CD4-positive, alpha-beta memory T cell (primary cell): ENCODE measurements at regions of chr16 and their contacts with region 1.

Region 1: GRCh38 chr16:69930117-69930776 is 20.9 kb upstream of the CLEC18A start:
- DNase-seq: peak in 4 of 5 donors; percentile 32 to 47 (median 40)
- H3K4me3 ChIP-seq: no peak overlapping the region
- H3K4me3 Mint-ChIP-seq: no peak overlapping the region
- H3K27ac ChIP-seq: no peak overlapping the region
- H3K27ac Mint-ChIP-seq: peak overlapping the region in 1 of 7 donors; percentile 63
- H3K4me1 ChIP-seq: no peaks in the 10 kb centered on the region
- H3K4me1 Mint-ChIP-seq: peaks cover 0 to 4% (median 0%) of the 10 kb centered on the region in 4 donors
- H3K27me3 ChIP-seq: no peaks in the 10 kb centered on the region
- H3K27me3 Mint-ChIP-seq: no peaks in the 10 kb centered on the region

Region 2: GRCh38 chr16:69709456-69710084 is 220.7 kb before region 1 on chr16:
- CTCF ChIA-PET with region 1: interaction called, 13 read pairs
- POLR2A ChIA-PET with region 1: no interaction called
- intact Hi-C with region 1: no loop called
- DNase-seq: peak in 4 of 5 donors; percentile 49 to 60 (median 58)
- H3K4me3 ChIP-seq: no peak overlapping the region
- H3K4me3 Mint-ChIP-seq: no peak overlapping the region
- H3K27ac ChIP-seq: no peak overlapping the region
- H3K27ac Mint-ChIP-seq: peak overlapping the region in 6 of 7 donors; percentile 0 to 70 (median 38)
- H3K4me1 ChIP-seq: peaks cover 6% of the 10 kb centered on the region
- H3K4me1 Mint-ChIP-seq: peaks cover 0 to 4% (median 2%) of the 10 kb centered on the region in 4 donors
- H3K27me3 ChIP-seq: no peaks in the 10 kb centered on the region
- H3K27me3 Mint-ChIP-seq: no peaks in the 10 kb centered on the region

Region 3: GRCh38 chr16:69796351-69797118 is 133.7 kb before region 1 on chr16:
- CTCF ChIA-PET with region 1: interaction called, 12 read pairs
- POLR2A ChIA-PET with region 1: no interaction called
- intact Hi-C with region 1: loop called (anchors 1 kb)
- DNase-seq: peak; percentile 21 to 43 (median 39)
- H3K4me3 ChIP-seq: no peak overlapping the region
- H3K4me3 Mint-ChIP-seq: no peak overlapping the region
- H3K27ac ChIP-seq: no peak overlapping the region
- H3K27ac Mint-ChIP-seq: no peak overlapping the region
- H3K4me1 ChIP-seq: no peaks in the 10 kb centered on the region
- H3K4me1 Mint-ChIP-seq: peaks cover 7 to 16% (median 8%) of the 10 kb centered on the region in 4 donors
- H3K27me3 ChIP-seq: no peaks in the 10 kb centered on the region
- H3K27me3 Mint-ChIP-seq: no peaks in the 10 kb centered on the region

Region 4: DNA sequence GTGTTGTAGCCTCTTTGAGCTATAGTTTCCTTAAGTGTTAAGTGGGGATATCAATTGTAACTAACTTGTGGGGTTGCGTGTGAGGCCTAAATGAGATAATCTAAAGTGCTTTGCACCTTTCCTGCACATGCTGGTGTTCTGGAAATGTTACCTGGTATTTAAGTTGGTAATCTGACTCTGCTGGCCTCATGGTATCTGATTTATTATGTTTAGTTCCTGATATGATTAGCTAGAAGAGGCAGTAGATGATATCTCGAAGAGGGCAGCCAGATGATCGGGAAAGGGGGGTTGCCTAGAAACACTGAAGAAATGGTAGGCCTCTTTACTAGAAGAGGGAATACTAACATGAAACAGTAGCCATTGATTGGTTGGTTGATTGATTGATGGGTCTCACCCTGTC is 44.5 kb before region 1 on chr16:
- CTCF ChIA-PET with region 1: interaction called, 17 read pairs
- POLR2A ChIA-PET with region 1: no interaction called
- intact Hi-C with region 1: no loop called
- DNase-seq: no peak
- H3K4me3 ChIP-seq: no peak overlapping the region
- H3K4me3 Mint-ChIP-seq: no peak overlapping the region
- H3K27ac ChIP-seq: no peak overlapping the region
- H3K27ac Mint-ChIP-seq: peak overlapping the region in 3 of 7 donors; percentile 24 to 46 (median 25)
- H3K4me1 ChIP-seq: no peaks in the 10 kb centered on the region
- H3K4me1 Mint-ChIP-seq: peaks cover 0 to 6% (median 2%) of the 10 kb centered on the region in 4 donors
- H3K27me3 ChIP-seq: no peaks in the 10 kb centered on the region
- H3K27me3 Mint-ChIP-seq: no peaks in the 10 kb centered on the region

Region 5: DNA sequence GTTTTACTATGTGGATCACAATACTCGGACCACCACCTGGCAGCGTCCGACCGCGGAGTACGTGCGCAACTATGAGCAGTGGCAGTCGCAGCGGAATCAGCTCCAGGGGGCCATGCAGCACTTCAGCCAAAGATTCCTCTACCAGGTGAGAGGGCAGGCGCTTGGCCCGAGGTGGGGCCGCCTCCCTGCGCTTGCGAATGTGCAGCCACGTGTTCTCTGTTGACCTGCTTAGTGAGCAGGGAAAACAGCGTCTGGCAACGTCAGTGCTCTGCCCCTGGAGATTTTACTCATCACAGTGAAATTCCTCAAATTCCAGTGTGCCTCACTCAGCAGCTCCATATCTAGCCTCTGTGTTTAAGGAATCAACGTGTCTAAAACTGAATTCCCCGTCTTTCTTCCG is 12.5 kb before region 1 on chr16:
- CTCF ChIA-PET with region 1: interaction called, 23 read pairs
- POLR2A ChIA-PET with region 1: no interaction called
- intact Hi-C with region 1: no loop called
- DNase-seq: no peak
- H3K4me3 ChIP-seq: no peak overlapping the region
- H3K4me3 Mint-ChIP-seq: no peak overlapping the region
- H3K27ac ChIP-seq: no peak overlapping the region
- H3K27ac Mint-ChIP-seq: no peak overlapping the region
- H3K4me1 ChIP-seq: no peaks in the 10 kb centered on the region
- H3K4me1 Mint-ChIP-seq: no peaks in the 10 kb centered on the region
- H3K27me3 ChIP-seq: no peaks in the 10 kb centered on the region
- H3K27me3 Mint-ChIP-seq: no peaks in the 10 kb centered on the region